GM10248 (cell line): ENCODE measurements at regions of chr18 and their contacts with region 1.

Region 1: DNA sequence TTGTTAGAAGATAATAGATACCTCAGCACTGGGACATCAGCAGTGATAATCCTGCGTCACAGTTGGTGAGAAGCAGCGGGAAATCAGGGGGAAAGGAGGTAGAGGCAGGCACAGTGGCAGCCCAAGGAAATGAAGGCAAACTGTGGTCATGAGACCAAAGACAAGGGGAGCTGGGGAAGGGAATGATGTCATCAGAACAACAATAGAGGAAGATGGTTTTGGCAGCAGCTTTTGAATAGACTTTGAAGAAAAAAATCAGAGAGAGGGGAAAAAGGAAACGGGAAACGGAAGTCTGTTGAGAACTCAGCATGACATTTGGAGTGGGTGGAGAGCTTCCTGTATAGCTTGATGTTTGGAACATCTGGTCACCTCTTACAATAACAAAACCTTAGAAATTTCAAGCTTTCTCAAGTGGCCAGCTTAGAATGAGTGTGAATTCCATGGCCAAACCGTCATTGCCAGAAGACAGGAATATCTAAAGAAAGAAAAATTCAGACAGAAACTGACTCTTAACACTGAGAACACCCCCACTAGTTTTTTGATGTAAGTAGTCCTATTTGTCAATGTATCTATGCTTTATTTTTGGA is 18.4 kb upstream of the YES1 start:
- DNase-seq: peak; percentile 35
- CTCF ChIP-seq: no peak

Region 2: DNA sequence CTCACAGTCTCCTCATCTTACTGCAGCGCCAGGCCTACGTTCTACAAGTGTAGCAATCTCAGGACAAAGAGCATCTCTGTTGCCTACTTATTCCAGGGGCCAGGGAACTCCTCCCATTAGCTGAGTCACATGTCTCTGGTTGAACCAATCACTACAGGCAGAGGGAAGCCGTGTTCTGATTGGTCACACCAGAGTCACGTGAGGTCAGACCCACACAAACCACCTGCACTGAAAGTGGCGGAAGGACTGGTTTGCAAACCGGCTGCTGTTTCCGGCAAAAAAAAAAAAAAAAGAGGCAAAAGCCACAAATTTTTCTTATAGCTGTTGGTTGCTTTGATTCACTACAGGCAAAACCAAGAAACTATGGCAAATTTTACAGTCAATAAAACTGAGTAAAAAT is 694.0 kb before region 1 on chr18:
- CTCF ChIA-PET with region 1: no interaction called
- POLR2A ChIA-PET with region 1: no interaction called
- DNase-seq: no peak
- CTCF ChIP-seq: no peak

Region 3: GRCh38 chr18:658001-658946 is 172.1 kb before region 1 on chr18:
- CTCF ChIA-PET with region 1: interaction called, 17 read pairs
- POLR2A ChIA-PET with region 1: no interaction called
- DNase-seq: peak; percentile 82
- CTCF ChIP-seq: no peak

Region 4: GRCh38 chr18:741931-742512 is 88.4 kb before region 1 on chr18:
- CTCF ChIA-PET with region 1: interaction called, 191 read pairs
- POLR2A ChIA-PET with region 1: no interaction called
- DNase-seq: peak; percentile 67
- CTCF ChIP-seq: peak; percentile 62

Region 5: GRCh38 chr18:778194-778927 is 52.0 kb before region 1 on chr18:
- CTCF ChIA-PET with region 1: interaction called, 21 read pairs
- POLR2A ChIA-PET with region 1: no interaction called
- DNase-seq: no peak
- CTCF ChIP-seq: no peak

Region 6: DNA sequence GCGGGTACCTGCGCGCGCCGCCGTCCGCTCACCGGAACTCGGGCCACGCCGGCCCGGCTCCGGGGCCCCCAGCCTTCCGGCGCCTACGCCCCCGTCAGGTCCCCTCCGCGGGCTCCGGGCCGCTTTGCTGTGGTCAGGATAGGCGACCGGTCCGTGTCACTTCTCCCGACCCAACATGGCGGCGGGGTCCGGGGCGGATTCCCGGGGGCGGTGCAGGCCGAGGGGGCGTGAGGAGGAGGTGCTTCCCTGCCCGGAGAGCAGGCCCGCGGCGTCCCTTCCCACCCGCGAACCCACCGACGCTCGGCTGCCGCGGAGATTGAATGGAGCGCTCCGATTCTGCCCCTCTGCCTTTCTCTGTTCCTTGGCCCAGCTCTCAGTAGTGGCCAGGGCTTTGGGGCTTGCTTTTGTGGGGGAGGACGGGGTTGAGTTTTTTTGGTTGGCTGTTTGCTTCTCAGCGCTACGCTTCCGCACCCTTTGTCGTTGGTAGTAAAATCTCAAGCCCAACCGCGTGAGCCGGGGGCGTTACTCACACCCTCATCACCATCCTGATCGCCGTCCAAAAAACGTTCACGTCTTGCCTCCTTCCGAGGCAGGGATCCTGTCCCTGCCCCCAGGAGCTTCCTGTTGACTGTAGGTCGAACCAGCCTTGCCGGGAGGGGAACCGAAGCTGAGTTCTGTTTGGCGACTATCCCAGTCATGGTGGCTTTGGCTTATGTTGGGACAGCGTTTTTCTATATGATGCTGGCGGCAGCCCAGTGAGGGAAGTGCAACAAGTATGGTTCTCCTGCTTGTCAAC is 17.8 kb before region 1 on chr18:
- CTCF ChIA-PET with region 1: interaction called, 49 read pairs
- POLR2A ChIA-PET with region 1: no interaction called
- DNase-seq: peak; percentile 92
- CTCF ChIP-seq: no peak

Region 7: DNA sequence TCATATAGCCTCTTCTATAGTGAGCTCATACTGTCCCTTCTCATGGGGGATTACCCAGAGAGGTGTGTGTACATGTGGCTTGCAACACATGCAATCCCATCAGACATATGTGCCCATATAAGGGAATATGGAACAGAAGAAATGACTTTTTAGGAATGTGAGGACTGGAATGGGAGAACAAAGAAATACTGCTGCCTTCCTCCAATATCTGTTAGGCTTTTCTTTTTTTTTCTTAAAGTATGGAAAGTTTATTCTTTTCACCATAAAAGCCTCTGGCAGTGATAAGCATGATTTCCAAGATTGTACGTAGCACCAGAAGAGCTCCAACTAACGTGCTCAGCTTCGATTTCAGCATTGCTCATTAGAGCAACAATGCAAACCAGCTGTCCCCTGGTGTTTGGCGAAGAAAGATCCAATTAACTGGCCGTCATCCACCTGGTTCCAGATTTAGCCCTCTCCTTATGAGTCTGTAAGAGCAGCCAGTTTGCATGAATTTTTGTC is 187.8 kb after region 1 on chr18:
- CTCF ChIA-PET with region 1: no interaction called
- POLR2A ChIA-PET with region 1: no interaction called
- DNase-seq: no peak
- CTCF ChIP-seq: no peak